Spleen (tissue), 13 donors: ENCODE measurements at regions of chr1 and their contacts with region 1.

Region 1: DNA sequence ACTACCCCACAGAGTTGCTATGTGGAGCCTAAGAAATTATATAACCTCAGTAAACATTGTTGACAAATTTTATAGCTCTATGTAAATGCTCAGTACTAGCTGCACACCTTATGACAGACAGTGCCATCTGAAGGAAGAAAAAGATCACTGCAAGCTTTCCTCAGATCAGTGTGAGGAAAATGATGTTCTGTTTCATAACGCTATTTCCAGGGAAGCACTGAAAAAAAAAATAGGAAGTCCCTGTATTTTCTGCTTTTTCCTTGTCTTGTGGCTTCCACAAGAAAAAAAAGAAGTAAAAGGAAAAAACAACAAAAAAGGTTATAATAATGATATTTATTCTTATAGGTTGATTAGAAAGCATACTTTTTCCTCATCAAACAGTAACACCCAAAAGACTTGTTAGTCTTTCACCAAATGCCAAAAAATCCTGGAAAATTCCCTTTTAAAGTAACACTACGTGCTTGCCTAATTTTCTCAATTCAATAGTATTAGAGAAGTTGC is 23.2 kb downstream of the LYST start:
- DNase-seq: no peak
- H3K4me3 ChIP-seq: no peak overlapping the region
- H3K27ac ChIP-seq: peak overlapping the region in 5 of 8 donors; percentile 31 to 81 (median 61)
- H3K4me1 ChIP-seq: peaks cover 22 to 100% (median 71%) of the 10 kb centered on the region in 6 donors
- H3K27me3 ChIP-seq: no peaks in the 10 kb centered on the region
- CTCF ChIP-seq: peak in 9 of 11 experiments; percentile 22 to 66 (median 43)
- POLR2A ChIP-seq: no peak

Region 2: GRCh38 chr1:235266325-235266724 is 577.2 kb before region 1 on chr1:
- intact Hi-C with region 1: no loop called
- DNase-seq: no peak
- H3K4me3 ChIP-seq: no peak overlapping the region
- H3K27ac ChIP-seq: no peak overlapping the region
- H3K4me1 ChIP-seq: peaks cover 16 to 94% (median 67%) of the 10 kb centered on the region in 6 donors
- H3K27me3 ChIP-seq: no peaks in the 10 kb centered on the region
- CTCF ChIP-seq: no peak
- POLR2A ChIP-seq: no peak

Region 3: DNA sequence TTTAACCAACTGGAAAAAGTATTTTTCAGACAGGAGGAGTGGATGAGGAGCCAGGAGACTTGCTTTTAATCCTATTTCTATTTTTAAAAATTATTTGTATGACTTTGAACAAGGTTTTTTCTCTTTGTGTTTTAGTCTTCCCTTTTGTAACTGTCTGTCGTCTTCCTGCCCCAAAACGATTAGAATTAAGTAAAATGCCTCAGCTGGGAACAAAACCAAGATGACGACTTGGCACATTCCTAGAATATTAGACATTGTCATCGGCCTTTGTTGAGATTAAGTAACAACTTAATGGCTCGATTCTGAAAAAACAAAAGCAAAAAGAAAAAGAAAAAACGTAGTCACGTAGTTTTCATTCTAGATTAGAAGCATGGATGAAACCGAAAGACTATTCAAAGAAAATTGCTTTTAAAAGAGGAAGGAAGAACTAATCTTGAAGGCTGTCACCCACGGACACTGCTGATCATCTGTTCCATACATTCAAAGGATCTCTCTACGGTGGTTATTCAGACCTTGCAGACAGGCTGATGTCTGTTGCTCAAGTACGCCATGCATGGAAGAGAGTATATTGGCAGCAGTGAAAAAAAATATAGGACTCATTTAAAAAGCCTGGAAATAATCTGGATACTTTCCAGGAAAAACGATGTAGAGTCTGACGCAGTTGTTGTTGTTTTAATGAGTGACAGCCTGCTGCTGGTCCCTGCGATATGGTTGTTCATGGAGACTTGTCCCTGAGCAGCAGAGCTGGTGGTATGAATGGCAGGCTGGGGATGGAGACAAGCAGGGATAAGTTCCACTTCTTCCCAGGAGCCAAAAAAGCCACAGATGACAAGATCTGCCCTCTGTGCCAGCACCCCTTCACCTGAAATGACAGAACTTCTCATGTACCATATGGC is 210.8 kb before region 1 on chr1:
- intact Hi-C with region 1: no loop called
- DNase-seq: peak; percentile 29
- H3K4me3 ChIP-seq: peak overlapping the region in 4 of 8 donors; percentile 2 to 43 (median 16)
- H3K27ac ChIP-seq: no peak overlapping the region
- H3K4me1 ChIP-seq: peaks cover 0 to 13% (median 0%) of the 10 kb centered on the region in 6 donors
- H3K27me3 ChIP-seq: peaks cover 0 to 8% (median 0%) of the 10 kb centered on the region in 7 donors
- CTCF ChIP-seq: no peak
- POLR2A ChIP-seq: no peak

Region 4: DNA sequence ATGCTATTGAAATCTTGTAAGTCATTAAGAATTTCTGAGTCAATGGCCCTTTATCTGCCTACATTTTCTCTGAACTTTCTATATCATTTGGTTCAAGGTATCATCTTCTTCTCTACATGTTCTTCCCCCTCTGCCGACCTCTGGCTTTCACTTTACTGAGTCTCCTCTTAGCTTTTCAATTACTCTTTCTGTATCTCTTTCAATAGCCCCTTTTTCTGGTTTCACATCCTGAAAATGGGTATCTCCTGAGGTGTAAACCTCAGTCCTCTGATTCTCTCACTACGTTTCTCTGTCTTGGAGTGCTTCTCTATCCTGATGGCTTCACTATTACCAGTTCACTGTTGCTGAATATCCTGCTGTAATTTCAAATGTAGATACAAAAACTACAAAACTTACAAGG is 75.7 kb before region 1 on chr1:
- intact Hi-C with region 1: no loop called
- DNase-seq: no peak
- H3K4me3 ChIP-seq: no peak overlapping the region
- H3K27ac ChIP-seq: no peak overlapping the region
- H3K4me1 ChIP-seq: peaks cover 0 to 21% (median 0%) of the 10 kb centered on the region in 6 donors
- H3K27me3 ChIP-seq: no peaks in the 10 kb centered on the region
- CTCF ChIP-seq: no peak
- POLR2A ChIP-seq: no peak

Region 5: GRCh38 chr1:235783148-235783776 is 60.2 kb before region 1 on chr1:
- intact Hi-C with region 1: no loop called
- DNase-seq: no peak
- H3K4me3 ChIP-seq: no peak overlapping the region
- H3K27ac ChIP-seq: no peak overlapping the region
- H3K4me1 ChIP-seq: peaks cover 0 to 12% (median 0%) of the 10 kb centered on the region in 6 donors
- H3K27me3 ChIP-seq: no peaks in the 10 kb centered on the region
- CTCF ChIP-seq: peak in 5 of 11 experiments; percentile 6 to 44 (median 12)
- POLR2A ChIP-seq: no peak

Region 6: DNA sequence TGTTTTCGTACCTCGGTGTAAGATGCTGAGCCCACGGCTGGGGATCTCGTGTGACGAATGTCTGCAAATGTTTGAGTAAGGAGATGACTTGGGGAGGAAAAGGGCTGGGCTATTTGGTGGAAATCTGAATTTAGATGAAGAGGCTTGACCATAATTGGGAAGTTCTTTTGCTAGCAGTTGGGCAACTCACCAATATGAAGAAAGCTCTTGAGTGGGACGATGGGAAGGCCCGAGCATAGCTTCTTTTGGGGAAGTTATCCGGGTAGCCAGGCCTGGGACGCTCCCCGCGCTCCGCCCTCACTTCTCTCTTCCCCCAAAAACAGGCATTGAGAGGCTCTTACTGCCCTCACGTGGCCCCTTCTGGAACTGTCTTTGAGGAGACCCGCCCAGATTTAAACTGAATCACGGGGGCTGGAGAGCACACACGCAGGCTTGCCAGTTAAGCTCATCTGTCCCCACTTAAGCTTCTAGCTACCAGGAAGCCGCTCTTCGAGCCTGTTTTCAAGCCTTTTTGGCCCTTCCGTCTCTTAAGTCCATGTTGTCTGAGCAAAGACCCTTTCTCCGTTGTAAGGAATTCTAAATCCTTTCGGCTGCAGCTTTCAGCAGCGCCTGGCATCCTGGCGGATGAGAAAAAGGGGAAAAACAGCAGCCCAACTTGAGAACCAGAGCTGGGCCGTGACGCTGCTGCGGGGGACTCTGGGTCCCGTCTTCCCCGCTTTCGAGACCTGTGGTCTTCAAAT is 128.2 kb after region 1 on chr1:
- intact Hi-C with region 1: loop called (anchors 5 kb)
- DNase-seq: peak; percentile 95
- H3K4me3 ChIP-seq: peak overlapping the region in 7 of 8 donors; percentile 6 to 58 (median 27)
- H3K27ac ChIP-seq: peak overlapping the region; percentile 58 to 95 (median 90)
- H3K4me1 ChIP-seq: peaks cover 10 to 40% (median 21%) of the 10 kb centered on the region in 6 donors
- H3K27me3 ChIP-seq: no peaks in the 10 kb centered on the region
- CTCF ChIP-seq: peak; percentile 85 to 97 (median 91)
- POLR2A ChIP-seq: peak in 1 of 3 donors; percentile 21